Heart right ventricle (tissue), 16 donors: ENCODE measurements at regions of chr2 and their contacts with region 1.

Region 1: DNA sequence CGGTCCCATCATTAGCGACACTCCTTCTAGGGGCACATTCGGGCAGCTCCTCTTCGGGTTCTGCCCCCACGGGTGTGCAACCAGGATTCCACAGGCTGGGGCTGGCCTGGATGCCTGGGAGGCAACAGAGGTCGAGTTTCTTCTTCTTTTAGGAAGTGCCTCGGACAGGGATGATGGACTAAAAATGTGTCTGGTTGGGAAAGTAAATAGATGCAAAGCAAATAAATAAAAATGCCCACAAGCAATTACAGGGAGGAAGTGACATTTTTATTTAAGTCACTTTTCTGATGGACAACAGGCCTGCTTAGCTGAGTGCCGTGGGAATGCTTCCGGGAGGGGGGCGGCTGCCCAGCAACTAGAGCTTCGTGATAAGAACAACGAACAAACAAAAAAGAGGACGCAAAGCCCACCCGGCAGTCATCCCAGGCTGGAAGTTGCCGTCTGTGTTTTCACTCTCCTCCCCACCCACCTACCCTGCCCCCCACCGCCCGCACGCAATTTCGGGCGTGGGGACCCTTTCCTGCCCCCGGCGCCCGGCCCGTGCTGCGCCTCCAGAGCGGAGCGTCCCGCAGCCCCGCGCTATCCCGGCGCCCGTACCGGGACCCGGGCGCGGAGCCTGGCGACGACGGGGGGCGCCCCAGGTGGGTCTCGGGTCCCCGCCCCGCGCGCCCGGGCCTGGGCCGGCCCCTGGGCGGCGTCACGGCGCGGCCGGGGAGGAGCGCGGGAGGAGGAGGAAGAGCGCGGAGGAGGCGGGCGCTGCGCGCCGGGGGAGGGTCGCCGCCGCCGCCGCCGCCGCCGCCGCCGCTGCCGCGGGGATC is 412 bp upstream of the NCK2 start:
- DNase-seq: peak; percentile 56 to 79
- ATAC-seq: peak; percentile 72 to 93 (median 90)
- H3K4me3 ChIP-seq: peak overlapping the region; percentile 53 to 85 (median 76)
- H3K27ac ChIP-seq: peak overlapping the region; percentile 89 to 97 (median 94)
- H3K4me1 ChIP-seq: peaks cover 13 to 55% (median 46%) of the 10 kb centered on the region in 9 donors
- H3K27me3 ChIP-seq: no peaks in the 10 kb centered on the region
- CTCF ChIP-seq: no peak

Region 2: DNA sequence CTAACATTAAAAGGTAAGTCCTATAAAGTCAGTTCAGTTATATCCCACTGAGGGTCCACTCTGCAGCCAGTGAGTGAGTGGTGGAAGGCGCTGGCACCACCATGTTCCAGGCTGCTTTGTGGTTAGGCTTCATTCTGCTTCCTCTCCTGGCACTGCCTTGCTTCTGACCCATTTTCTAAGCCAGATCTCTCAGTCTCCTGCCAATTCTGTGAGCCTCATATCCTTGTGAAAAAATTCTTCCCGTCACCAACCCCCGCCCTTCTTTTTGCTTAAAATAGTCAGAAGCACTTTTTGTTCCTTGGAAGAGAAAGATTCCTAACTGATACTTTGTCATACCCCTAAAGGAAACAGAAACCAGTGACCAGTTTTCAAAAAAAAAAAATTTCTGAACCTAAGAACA is 139.4 kb before region 1 on chr2:
- intact Hi-C with region 1: loop called in 3 of 10 experiments (anchors 10 kb)
- DNase-seq: peak in 1 of 2 donors; percentile 45
- ATAC-seq: peak; percentile 68 to 92 (median 82)
- H3K4me3 ChIP-seq: peak overlapping the region in 2 of 10 donors; percentile 10 to 19
- H3K27ac ChIP-seq: peak overlapping the region; percentile 21 to 70 (median 37)
- H3K4me1 ChIP-seq: peaks cover 0 to 31% (median 18%) of the 10 kb centered on the region in 9 donors
- H3K27me3 ChIP-seq: no peaks in the 10 kb centered on the region
- CTCF ChIP-seq: no peak

Region 3: GRCh38 chr2:105812180-105813044 is 68.1 kb after region 1 on chr2:
- intact Hi-C with region 1: loop called in 1 of 10 experiments (anchors 10 kb)
- DNase-seq: peak; percentile 40 to 50
- ATAC-seq: peak; percentile 74 to 91 (median 88)
- H3K4me3 ChIP-seq: no peak overlapping the region
- H3K27ac ChIP-seq: peak overlapping the region in 5 of 10 donors; percentile 26 to 41 (median 30)
- H3K4me1 ChIP-seq: peaks cover 4 to 69% (median 33%) of the 10 kb centered on the region in 9 donors
- H3K27me3 ChIP-seq: no peaks in the 10 kb centered on the region
- CTCF ChIP-seq: peak in 3 of 9 donors; percentile 17 to 28 (median 19)

Region 4: GRCh38 chr2:105866216-105867185 is 122.2 kb after region 1 on chr2:
- intact Hi-C with region 1: no loop called
- DNase-seq: no peak
- ATAC-seq: no peak
- H3K4me3 ChIP-seq: no peak overlapping the region
- H3K27ac ChIP-seq: no peak overlapping the region
- H3K4me1 ChIP-seq: peaks cover 7 to 65% (median 38%) of the 10 kb centered on the region in 9 donors
- H3K27me3 ChIP-seq: no peaks in the 10 kb centered on the region
- CTCF ChIP-seq: no peak

Region 5: DNA sequence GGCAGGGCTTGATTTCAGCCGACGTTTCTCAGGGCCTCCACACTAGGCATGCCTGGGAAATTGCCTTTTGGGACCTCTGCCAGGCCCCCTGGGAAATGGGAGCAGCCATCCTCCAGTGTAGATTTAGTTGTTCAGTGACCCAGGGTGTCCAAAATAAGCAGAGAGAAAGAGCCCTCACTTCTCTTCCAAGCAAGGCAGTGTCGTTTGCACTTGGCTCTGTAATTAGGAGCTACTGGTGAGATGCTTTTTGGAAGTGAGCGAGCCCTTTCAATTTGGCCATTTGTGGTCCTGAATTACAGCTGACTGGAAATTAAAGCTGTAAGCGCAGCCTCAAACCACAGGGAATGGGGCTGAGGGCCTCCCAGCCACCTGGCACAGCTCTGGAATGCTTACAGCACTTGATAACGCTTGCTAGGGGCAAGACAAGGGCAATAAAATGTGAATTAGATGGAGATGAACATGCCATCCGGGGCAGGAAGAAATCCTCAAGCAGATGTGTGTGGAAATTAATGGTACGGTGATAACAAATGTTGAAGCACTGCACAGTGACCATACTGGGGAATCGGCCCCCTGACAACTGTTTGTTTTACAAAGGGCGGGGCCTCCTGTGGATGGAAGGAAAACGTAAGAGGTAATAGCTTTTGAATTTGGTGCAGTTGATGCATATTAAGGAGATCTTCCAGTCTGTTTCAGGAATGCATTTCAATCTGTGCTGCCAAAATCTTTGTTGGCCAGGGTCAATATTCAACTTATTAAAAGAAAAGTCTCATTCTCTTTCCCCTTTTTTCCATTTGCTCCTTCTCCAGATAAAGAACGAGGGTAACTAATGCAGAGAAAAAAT is 276.7 kb after region 1 on chr2:
- intact Hi-C with region 1: loop called in 1 of 10 experiments (anchors 10 kb)
- DNase-seq: peak; percentile 16 to 59
- ATAC-seq: peak in 6 of 8 donors; percentile 18 to 52 (median 38)
- H3K4me3 ChIP-seq: no peak overlapping the region
- H3K27ac ChIP-seq: peak overlapping the region in 4 of 10 donors; percentile 6 to 55 (median 40)
- H3K4me1 ChIP-seq: peaks cover 0 to 40% (median 25%) of the 10 kb centered on the region in 9 donors
- H3K27me3 ChIP-seq: no peaks in the 10 kb centered on the region
- CTCF ChIP-seq: no peak

Region 6: DNA sequence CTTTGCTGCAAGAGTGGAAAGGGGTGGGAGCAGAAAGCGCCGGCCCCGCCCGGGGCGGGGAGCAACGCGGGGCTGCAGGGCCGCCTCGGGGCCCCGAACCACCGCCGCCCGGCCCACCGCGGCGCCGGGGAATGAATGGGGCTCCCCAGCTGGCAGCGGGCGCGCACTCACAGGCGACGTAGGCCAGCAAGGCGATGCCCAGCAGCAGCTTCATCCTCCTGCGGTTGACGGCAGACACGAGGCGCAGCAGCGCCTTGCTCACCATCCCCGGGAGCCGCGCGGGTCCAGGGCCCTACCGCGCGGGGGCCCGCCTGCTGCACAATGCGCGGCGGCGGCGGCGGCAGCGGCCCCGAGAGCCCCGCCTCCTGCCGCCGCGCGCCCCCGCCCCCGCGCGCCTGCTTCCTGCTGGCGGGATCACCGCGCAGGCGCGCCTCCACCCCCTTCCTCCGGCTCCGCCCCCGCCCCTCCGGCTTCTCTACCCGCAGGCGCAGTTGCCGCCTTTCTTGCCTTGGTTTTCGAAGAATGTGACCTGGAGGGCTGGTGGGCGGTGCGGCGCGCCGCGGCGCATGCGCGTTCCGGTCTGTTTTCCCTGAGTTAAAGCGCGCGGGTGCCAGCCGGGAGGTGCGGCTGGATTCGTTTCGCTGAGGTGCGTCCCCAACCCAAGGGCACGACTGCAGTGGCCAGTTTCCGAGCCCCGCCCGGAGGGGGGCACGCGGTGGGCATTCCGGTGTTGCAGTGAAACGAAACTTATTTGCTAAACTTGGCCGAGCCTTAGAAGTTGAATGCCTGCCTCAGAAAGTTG is 449.9 kb after region 1 on chr2 and contains the start of gene UXS1:
- intact Hi-C with region 1: loop called in 1 of 10 experiments (anchors 5 kb)
- DNase-seq: peak; percentile 97 to 99
- ATAC-seq: peak; percentile 92 to 99 (median 97)
- H3K4me3 ChIP-seq: peak within 1 kb of the TSS; percentile 73 to 98 (median 95)
- H3K27ac ChIP-seq: peak within 1 kb of the TSS; percentile 49 to 94 (median 88)
- H3K4me1 ChIP-seq: peaks cover 2 to 45% (median 17%) of the 10 kb centered on the region in 9 donors
- H3K27me3 ChIP-seq: no peaks in the 10 kb centered on the region
- CTCF ChIP-seq: no peak
- total RNA-seq, gene UXS1: 22.0 to 35.0 (median 25.9) TPM